BJ (cell line): ENCODE measurements at regions of chr10 and their contacts with region 1.

Region 1: DNA sequence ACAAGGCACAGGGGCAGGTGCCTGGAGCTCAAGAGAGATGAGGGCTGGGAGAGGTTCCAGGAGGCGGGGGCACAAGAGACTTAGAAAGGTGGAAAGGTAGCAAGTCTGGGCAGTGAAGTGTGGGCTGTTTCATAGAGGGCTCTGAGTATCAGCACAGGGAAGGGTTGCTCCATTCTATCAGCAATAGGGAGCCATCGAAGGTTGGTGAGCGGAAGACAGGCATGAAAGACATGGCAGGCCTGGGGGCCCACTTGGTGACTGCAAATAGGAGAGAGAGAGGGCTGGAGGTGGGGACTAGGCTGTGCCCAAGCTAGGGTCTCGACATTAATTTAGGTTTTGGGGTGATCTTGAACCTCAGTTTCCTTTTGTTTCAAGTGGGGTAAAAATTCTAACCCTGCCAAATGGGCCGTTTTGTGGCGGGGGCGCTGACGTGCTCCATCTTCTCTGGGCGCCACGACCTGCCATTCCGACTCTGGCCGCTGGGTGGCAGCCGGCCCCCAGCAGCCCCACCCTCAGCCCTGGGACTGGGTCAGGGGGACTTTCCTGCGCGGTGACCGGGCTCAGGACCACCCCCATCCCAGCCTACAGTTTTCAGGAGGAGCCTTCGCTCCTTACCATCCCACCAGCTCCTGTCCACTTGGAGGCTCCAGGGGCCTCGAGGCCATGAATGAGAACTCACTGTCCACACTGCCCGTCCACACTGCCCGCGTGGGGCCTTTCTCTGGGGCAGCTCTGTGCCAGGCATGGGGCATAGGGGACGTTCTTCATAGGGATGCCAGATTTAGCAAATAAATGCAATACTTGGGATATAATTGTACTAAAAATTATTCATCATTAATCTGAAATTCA is 37.2 kb upstream of the PCBD1 start:
- DNase-seq: no peak
- H3K4me3 ChIP-seq: no peak overlapping the region
- H3K27me3 ChIP-seq: peaks cover 5% of the 10 kb centered on the region
- CTCF ChIP-seq: peak; percentile 97

Region 2: GRCh38 chr10:70903262-70903921 is 22.2 kb before region 1 on chr10:
- CTCF ChIA-PET with region 1: interaction called, 22 read pairs
- POLR2A ChIA-PET with region 1: no interaction called
- DNase-seq: no peak
- H3K4me3 ChIP-seq: no peak overlapping the region
- H3K27me3 ChIP-seq: peaks cover 2% of the 10 kb centered on the region; the same call in 1 of the 2 replicates
- CTCF ChIP-seq: peak; percentile 93

Region 3: DNA sequence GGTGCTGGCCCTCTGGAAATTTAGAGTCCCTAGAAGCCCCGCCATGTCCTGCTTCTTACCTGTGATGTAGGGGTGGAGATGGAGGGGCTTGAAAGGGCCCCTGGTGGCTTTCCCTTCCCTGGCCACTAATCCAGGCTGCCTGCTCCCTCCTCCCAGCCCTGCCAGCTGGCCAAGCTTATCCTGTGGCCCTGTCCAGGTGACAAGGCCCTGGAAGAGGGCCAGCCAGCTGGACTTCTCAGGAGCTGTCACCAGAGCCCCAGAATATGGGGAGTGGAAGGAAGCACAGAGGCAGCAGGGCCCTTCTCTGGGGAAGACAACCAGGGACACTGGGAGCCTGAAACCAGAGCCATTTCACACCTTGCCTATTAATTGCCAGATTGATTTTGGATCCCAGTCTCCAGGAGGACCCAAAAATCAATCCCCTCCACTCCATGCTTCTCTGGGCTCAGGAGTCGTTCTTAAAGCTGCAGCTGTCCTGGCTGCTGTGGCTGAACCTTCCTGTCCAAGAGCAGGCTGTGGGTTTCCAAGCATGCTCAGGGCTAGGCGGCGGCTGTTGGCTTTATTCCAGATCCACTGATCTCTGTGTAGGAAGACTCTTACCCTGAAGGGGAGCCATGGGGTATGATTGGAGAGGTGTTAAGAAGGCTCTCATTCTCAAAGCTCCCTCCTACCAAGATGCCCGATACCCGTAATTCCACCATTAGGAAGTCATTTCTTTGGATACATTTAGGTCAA is 15.4 kb after region 1 on chr10:
- CTCF ChIA-PET with region 1: interaction called, 45 read pairs
- POLR2A ChIA-PET with region 1: no interaction called
- DNase-seq: no peak
- H3K4me3 ChIP-seq: no peak overlapping the region
- H3K27me3 ChIP-seq: peaks cover 14% of the 10 kb centered on the region
- CTCF ChIP-seq: no peak

Region 4: DNA sequence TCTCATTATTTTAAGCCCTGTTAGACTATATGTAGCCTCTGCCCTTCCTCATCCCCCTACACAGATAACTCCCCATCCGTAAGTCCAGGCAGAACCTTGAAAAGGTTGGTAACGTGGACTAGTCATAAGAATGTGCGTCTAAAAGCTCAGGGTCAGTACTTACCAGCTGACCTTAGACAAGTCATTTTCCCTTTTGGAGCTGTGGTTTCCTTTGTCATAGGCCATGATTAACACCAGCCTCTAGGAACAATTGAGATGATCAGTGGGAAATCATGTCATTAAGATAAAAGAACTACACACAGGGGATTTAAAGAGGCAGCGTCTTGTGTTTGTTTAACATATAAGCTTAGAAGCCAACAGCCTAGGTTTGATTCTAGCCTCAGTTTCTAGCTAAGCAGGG is 279.9 kb after region 1 on chr10:
- CTCF ChIA-PET with region 1: interaction called, 16 read pairs
- POLR2A ChIA-PET with region 1: no interaction called
- DNase-seq: no peak
- H3K4me3 ChIP-seq: no peak overlapping the region
- H3K27me3 ChIP-seq: peaks cover 25% of the 10 kb centered on the region
- CTCF ChIP-seq: no peak

Region 5: GRCh38 chr10:71212318-71213126 is 286.9 kb after region 1 on chr10 and contains the start of gene UNC5B:
- CTCF ChIA-PET with region 1: interaction called, 16 read pairs
- POLR2A ChIA-PET with region 1: no interaction called
- DNase-seq: no peak
- H3K4me3 ChIP-seq: peak within 1 kb of the TSS; percentile 79
- H3K27me3 ChIP-seq: peaks cover 22% of the 10 kb centered on the region
- CTCF ChIP-seq: no peak; the same call in 1 of the 2 replicates
- polyA plus RNA-seq, gene UNC5B: 17.5 and 27.4 TPM in 2 replicates

Region 6: GRCh38 chr10:71270301-71271220 is 345.0 kb after region 1 on chr10:
- CTCF ChIA-PET with region 1: interaction called, 23 read pairs
- POLR2A ChIA-PET with region 1: no interaction called
- DNase-seq: no peak
- H3K4me3 ChIP-seq: no peak overlapping the region
- H3K27me3 ChIP-seq: no peaks in the 10 kb centered on the region
- CTCF ChIP-seq: peak; percentile 81

Region 7: DNA sequence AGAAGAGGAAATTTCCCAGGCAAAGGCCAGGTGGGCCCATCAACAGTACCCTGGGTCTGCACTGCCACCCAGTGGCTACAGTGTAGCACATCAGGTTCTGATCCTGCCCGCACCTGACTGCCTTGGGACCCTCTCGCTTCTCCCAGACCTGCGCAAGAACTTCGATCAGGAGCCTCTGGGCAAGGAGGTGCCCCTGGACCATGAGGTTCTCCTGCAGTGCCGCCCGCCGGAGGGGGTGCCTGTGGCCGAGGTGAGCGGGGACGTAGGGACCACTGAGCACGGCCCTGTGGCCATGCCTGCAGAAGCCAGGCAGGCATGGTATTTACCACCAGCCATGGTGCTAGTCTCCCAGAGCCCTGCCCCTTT is 359.6 kb after region 1 on chr10:
- CTCF ChIA-PET with region 1: interaction called, 63 read pairs
- POLR2A ChIA-PET with region 1: no interaction called
- DNase-seq: no peak
- H3K4me3 ChIP-seq: no peak overlapping the region
- H3K27me3 ChIP-seq: no peaks in the 10 kb centered on the region
- CTCF ChIP-seq: peak; percentile 67